Activated T-helper 1 cell treated with anti-CD3 and anti-CD28 coated beads, Interleukin-12 subunit alpha, Interleukin-12 subunit beta, Interleukin-2, Interleukin-4 antibody, amounts not matched to agents 30 ng/mL and 10 ng/mL and 1 ng/mL, durations not matched to agents 14 hours and 24 hours and 36 hours (primary cell): ENCODE measurements at regions of chr4 and their contacts with region 1.

Region 1: DNA sequence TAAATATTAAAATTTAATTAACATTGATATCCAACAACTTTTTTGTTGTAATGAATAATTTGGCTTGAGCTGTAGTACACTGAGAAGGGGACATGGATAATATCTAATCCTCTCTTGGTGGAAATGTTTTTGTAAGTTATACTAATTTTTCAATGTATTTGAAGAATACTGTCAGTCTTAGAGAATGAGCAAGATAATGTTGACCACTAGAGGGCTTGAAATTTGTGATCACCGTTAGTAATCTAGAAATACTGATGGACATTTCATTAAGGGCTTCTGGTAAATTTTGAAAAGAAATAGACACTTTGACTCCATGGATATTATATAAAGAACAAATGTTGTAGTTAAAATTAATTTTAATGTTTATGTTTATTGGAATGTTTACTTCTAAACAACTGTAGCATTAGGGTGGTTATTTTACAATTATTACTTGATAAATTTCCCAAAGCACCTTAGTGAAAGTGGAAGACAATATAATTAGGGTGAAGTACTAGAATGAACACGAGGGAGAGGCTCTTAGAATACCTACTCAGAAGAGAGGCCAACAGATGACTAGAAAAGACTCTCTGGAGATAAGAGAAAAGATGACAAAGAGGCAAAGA is 20.0 kb upstream of the CAMK2D start:
- DNase-seq: no peak
- H3K4me3 Mint-ChIP-seq: no peak overlapping the region
- H3K27ac Mint-ChIP-seq: no peak overlapping the region
- H3K4me1 Mint-ChIP-seq: peaks cover 10% of the 10 kb centered on the region
- H3K27me3 Mint-ChIP-seq: no peaks in the 10 kb centered on the region

Region 2: DNA sequence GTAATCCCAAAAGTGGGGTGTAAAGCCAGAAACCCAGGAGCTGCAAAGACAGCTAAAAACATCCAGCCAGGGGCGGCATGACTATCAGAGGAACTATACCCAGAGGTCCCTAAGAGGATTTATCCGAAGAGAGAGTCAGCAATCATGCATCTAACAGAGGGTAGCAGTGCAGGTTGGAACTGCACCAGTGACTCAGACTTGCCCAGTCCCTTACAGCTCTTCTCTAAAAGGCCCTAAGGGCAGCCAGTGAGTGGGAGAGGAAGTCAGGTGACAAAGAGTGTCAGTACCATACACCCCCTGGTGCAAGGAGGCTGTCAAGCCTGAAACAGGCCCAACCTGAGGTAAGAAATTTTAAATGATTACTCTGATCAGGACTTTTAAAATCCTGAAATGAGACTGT is 108.1 kb before region 1 on chr4:
- intact Hi-C with region 1: no loop called
- DNase-seq: no peak
- H3K4me3 Mint-ChIP-seq: no peak overlapping the region
- H3K27ac Mint-ChIP-seq: peak overlapping the region; percentile 44
- H3K4me1 Mint-ChIP-seq: peaks cover 60% of the 10 kb centered on the region
- H3K27me3 Mint-ChIP-seq: no peaks in the 10 kb centered on the region

Region 3: DNA sequence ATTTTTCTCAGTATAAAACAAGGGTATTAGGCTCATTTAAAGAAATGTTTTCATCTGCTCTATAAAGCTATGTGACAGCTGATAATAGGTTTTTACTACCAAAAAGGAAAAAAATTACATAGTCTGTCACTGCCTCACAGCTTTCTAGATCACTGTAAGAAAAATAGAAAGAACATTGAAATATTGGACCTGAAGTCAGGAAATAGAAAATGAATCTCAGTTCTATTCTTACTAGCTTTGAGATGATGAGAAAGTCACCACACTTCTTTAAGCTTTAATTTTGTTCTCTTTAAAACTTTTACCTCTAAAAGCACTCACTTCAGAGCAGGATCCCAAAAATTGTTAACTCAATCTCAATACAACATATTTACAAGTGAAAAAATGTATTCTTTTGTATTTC is 25.3 kb after region 1 on chr4:
- intact Hi-C with region 1: loop called (anchors 2 kb)
- DNase-seq: no peak
- H3K4me3 Mint-ChIP-seq: no peak overlapping the region
- H3K27ac Mint-ChIP-seq: no peak overlapping the region
- H3K4me1 Mint-ChIP-seq: no peaks in the 10 kb centered on the region
- H3K27me3 Mint-ChIP-seq: no peaks in the 10 kb centered on the region

Region 4: GRCh38 chr4:113901994-113902787 is 120.7 kb after region 1 on chr4:
- intact Hi-C with region 1: loop called (anchors 5 kb)
- DNase-seq: peak; percentile 10
- H3K4me3 Mint-ChIP-seq: peak overlapping the region; percentile 22
- H3K27ac Mint-ChIP-seq: no peak overlapping the region
- H3K4me1 Mint-ChIP-seq: peaks cover 36% of the 10 kb centered on the region
- H3K27me3 Mint-ChIP-seq: no peaks in the 10 kb centered on the region